ENCODE measurements at regions of chr4 and their contacts with region 1.

Region 1: DNA sequence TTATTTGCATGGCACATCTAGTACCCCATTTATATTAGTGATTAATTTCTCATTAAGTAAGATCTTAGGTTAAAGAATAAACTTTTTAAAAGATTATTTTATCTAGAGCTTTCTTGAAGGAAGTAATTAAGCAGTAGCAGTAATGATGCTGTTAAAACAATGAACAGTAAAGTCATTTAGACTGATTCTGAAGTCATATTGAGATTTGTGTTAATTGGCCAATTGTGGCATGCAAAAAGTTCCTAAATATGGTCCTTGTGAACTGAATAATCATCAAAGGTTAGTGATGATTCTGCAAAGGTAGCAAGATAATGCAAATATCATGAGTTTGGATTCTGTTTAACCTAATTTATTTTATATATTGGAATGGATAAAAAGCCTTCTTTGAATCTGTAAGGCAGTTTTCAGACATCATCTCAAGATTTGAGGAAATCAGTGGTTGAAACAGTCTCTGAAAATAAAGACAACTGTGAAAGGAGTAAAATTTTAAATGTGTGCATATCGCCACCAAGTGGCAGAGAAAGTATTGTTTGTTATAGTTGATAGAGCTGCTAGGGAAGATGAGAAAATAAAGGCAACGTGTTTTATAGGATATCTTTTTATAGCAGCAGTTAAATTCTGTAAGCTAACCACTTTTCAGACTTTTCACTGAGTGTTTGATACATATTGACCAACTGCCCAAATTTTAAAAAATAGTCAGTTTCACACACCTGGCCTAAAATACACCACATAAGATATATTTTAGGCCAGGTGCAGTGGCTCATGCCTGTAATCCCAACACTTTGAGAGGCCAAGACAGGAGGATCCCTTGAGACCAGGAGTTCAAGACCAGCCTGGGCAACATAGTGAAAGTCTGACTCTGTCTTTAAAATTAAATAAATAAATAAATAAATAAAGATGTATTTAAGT is 79.6 kb downstream of the CCKAR start:
- DNase-seq: no peak
- ATAC-seq: no peak; the same call in 1 of the 2 replicates
- H3K4me3 Mint-ChIP-seq: no peak overlapping the region
- H3K27ac Mint-ChIP-seq: no peak overlapping the region
- H3K4me1 Mint-ChIP-seq: peaks cover 51% of the 10 kb centered on the region
- H3K27me3 Mint-ChIP-seq: no peaks in the 10 kb centered on the region
- CTCF ChIP-seq: peak; percentile 57

Region 2: GRCh38 chr4:26081795-26082498 is 328.7 kb before region 1 on chr4:
- CTCF ChIA-PET with region 1: interaction called, 16 read pairs
- POLR2A ChIA-PET with region 1: no interaction called
- DNase-seq: no peak
- ATAC-seq: peak; percentile 82
- H3K4me3 Mint-ChIP-seq: no peak overlapping the region
- H3K27ac Mint-ChIP-seq: no peak overlapping the region
- H3K4me1 Mint-ChIP-seq: peaks cover 23% of the 10 kb centered on the region
- H3K27me3 Mint-ChIP-seq: no peaks in the 10 kb centered on the region
- CTCF ChIP-seq: no peak

Region 3: GRCh38 chr4:26325191-26325590 is 85.4 kb before region 1 on chr4:
- CTCF ChIA-PET with region 1: interaction called, 37 read pairs
- POLR2A ChIA-PET with region 1: no interaction called
- DNase-seq: no peak
- ATAC-seq: peak; percentile 9; the same call in 1 of the 2 replicates
- H3K4me3 Mint-ChIP-seq: peak overlapping the region; percentile 50
- H3K27ac Mint-ChIP-seq: peak overlapping the region; percentile 70
- H3K4me1 Mint-ChIP-seq: peaks cover 48% of the 10 kb centered on the region
- H3K27me3 Mint-ChIP-seq: no peaks in the 10 kb centered on the region
- CTCF ChIP-seq: no peak

Region 4: GRCh38 chr4:26568446-26568994 is 157.9 kb after region 1 on chr4:
- CTCF ChIA-PET with region 1: no interaction called
- POLR2A ChIA-PET with region 1: no interaction called
- DNase-seq: no peak
- ATAC-seq: no peak
- H3K4me3 Mint-ChIP-seq: no peak overlapping the region
- H3K27ac Mint-ChIP-seq: no peak overlapping the region
- H3K4me1 Mint-ChIP-seq: 0 out of 2 replicates have a peak, but pooled peaks cover 3% of the 10 kb centered on the region
- H3K27me3 Mint-ChIP-seq: no peaks in the 10 kb centered on the region; the same call in 1 of the 2 replicates
- CTCF ChIP-seq: no peak